Heart right ventricle (tissue), 16 donors: ENCODE measurements at regions of chr14 and their contacts with region 1.

Region 1: DNA sequence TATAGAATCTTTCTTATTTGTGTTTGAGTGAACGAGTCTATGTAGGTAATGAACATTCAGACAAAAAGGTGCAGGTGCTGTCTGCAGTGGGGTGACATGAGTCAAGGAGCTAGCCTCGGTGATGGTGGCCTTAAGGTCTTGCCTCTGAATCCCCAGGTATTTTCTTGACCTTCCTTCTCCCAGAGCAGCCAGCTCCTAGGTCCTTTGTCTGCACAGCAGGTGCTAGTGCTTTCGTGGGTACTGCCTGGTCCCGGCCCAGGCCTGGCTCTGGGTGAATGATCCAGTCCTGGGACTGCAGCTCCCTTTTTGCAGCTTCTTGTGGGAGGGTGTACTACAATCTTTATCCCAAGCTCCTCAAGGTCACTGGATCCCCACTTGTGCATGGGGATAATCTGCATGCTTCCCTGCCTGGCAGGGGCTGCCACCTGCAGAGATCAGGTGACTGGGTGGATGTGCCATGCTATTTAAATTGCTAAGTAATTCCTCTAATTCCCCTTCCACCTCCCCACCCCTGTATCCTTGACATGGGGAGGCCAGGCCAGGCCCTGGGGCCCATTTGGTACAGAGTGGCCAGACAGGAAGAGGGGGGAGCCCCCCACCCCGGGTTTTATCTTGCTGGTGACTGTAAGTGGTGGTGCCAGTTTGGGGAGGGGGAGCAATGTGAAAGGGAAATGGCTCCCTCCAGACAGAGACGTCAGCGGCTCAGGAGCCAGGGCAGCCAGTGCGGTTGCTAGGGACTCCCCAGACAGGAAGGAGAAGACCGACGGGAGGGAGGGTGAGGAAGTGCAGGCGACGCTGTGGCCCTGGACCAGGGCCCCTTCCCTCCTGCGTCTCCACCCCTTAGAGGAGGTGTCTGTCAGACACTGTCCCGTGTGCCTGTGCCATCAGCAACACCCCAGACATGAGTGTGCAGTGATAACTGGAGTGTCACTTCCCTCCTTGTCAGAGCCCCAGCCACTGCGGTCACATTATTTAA is 6.7 kb downstream of the VASH1 start:
- DNase-seq: peak; percentile 77 to 89
- ATAC-seq: peak; percentile 79 to 91 (median 86)
- H3K4me3 ChIP-seq: peak overlapping the region in 4 of 10 donors; percentile 6 to 25 (median 10)
- H3K27ac ChIP-seq: peak overlapping the region; percentile 57 to 95 (median 82)
- H3K4me1 ChIP-seq: peaks cover 29 to 99% (median 81%) of the 10 kb centered on the region in 9 donors
- H3K27me3 ChIP-seq: peaks cover 0 to 3% (median 0%) of the 10 kb centered on the region in 7 donors
- CTCF ChIP-seq: no peak

Region 2: GRCh38 chr14:76687611-76688382 is 80.2 kb before region 1 on chr14:
- intact Hi-C with region 1: no loop called
- DNase-seq: no peak
- ATAC-seq: no peak
- H3K4me3 ChIP-seq: no peak overlapping the region
- H3K27ac ChIP-seq: no peak overlapping the region
- H3K4me1 ChIP-seq: no peaks in the 10 kb centered on the region
- H3K27me3 ChIP-seq: no peaks in the 10 kb centered on the region
- CTCF ChIP-seq: no peak

Region 3: DNA sequence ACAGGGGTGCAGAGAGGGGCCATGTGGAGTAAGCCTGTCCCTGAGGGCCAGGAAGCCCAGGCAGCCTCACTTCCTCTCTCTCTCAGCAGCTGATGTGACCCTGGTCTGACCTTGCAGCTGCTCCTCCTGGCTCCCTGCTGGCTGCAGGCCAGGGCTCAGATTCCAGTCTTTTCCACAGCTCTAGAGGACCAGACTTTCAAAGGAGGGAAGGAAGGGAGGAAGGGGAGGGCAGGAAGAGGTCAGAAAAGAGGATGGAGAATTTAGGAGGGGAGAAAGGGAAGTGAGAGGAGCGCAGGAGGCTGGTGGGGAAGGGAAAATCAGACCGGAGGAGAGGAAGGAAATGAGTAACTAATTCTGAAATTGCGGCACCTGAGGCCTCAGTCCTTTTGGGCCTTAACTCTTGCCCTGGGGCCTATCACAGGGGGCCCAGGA is 47.6 kb before region 1 on chr14:
- intact Hi-C with region 1: loop called in 4 of 10 experiments (anchors 2 to 5 kb)
- DNase-seq: peak; percentile 88 to 90
- ATAC-seq: peak; percentile 78 to 91 (median 85)
- H3K4me3 ChIP-seq: no peak overlapping the region
- H3K27ac ChIP-seq: peak overlapping the region in 9 of 10 donors; percentile 61 to 87 (median 73)
- H3K4me1 ChIP-seq: peaks cover 19 to 88% (median 69%) of the 10 kb centered on the region in 9 donors
- H3K27me3 ChIP-seq: no peaks in the 10 kb centered on the region
- CTCF ChIP-seq: no peak

Region 4: GRCh38 chr14:76729953-76730505 is 37.9 kb before region 1 on chr14:
- intact Hi-C with region 1: loop called in 1 of 10 experiments (anchors 5 kb)
- DNase-seq: no peak
- ATAC-seq: no peak
- H3K4me3 ChIP-seq: no peak overlapping the region
- H3K27ac ChIP-seq: peak overlapping the region in 2 of 10 donors; percentile 88
- H3K4me1 ChIP-seq: peaks cover 0 to 46% (median 23%) of the 10 kb centered on the region in 9 donors
- H3K27me3 ChIP-seq: no peaks in the 10 kb centered on the region
- CTCF ChIP-seq: no peak

Region 5: DNA sequence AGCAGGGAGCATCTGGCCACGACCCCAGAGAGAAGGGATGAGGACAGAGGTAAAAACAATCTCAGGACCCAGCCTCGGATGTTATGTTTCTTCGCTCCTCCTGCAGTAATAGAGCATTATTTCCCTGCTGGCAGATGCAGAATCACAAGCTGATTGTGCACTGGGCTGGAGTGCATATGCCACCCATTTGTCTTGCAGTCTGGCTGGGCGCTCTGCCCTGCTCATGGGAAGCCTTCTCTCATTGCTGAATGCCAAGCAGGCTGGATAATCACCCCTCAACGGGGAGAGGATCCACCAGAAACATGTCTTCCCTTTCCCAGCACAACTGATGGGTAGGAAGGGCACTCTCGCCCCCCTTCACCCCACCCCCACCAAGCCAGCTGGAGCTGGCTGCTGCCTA is 15.2 kb before region 1 on chr14:
- intact Hi-C with region 1: no loop called
- DNase-seq: no peak
- ATAC-seq: no peak
- H3K4me3 ChIP-seq: no peak overlapping the region
- H3K27ac ChIP-seq: no peak overlapping the region
- H3K4me1 ChIP-seq: no peaks in the 10 kb centered on the region
- H3K27me3 ChIP-seq: no peaks in the 10 kb centered on the region
- CTCF ChIP-seq: no peak